Heart left ventricle (tissue), 16 donors: ENCODE measurements at regions of chr20 and their contacts with region 1.

Region 1: DNA sequence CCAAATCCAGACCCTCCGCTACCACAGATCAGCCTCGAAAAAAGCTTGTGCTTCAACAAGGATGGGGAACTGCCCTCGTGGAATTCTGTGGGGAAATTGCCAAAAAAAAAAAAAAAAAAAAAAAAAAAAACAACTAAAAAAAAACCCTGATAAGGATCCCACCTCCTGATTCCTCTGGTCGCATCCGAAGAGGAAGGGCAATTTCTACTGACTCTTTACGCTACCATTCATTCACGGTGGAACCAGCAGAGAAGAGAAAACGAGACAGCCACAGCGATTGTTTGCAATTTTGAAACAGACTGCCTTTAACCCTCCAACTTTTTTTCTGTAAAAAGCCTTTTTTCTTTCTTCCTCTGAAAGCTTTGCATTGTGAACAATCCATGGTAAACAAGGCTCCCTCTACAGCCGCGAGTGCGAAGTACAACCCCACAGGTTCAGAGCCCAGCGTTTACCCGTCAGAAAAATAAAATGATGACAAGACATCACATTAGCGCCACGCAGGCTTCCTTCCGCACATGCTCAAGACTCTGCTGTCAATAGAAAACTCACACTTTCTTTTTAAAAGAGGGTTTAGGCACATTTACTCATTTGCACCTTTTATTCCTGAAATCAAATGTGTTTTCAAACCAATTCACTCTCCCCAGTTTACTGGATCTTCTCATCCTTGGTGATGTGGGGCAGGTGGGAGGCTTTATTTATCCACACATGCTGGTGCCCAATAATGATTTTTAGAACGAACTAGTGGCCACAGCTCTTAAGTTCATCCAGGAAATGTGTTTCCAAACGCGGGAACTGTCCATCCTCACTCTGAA is 100.0 kb downstream of the NOL4L start:
- DNase-seq: peak in 4 of 5 donors; percentile 62 to 78 (median 72)
- ATAC-seq: peak; percentile 27 to 66 (median 50)
- H3K4me3 ChIP-seq: peak overlapping the region; percentile 55 to 99 (median 81)
- H3K27ac ChIP-seq: peak overlapping the region in 11 of 12 donors; percentile 68 to 93 (median 83)
- H3K4me1 ChIP-seq: peaks cover 0 to 41% (median 22%) of the 10 kb centered on the region in 12 donors
- H3K27me3 ChIP-seq: no peaks in the 10 kb centered on the region
- CTCF ChIP-seq: peak; percentile 55 to 92 (median 80)
- POLR2A ChIP-seq: no peak

Region 2: GRCh38 chr20:32155017-32155981 is 329.9 kb before region 1 on chr20:
- intact Hi-C with region 1: loop called in 2 of 10 experiments (anchors 5 to 10 kb)
- DNase-seq: peak; percentile 84 to 92 (median 89)
- ATAC-seq: peak; percentile 77 to 96 (median 94)
- H3K4me3 ChIP-seq: no peak overlapping the region
- H3K27ac ChIP-seq: peak overlapping the region in 11 of 12 donors; percentile 18 to 72 (median 57)
- H3K4me1 ChIP-seq: peaks cover 3 to 24% (median 14%) of the 10 kb centered on the region in 12 donors
- H3K27me3 ChIP-seq: no peaks in the 10 kb centered on the region
- CTCF ChIP-seq: peak in 11 of 12 donors; percentile 4 to 50 (median 33)
- POLR2A ChIP-seq: no peak

Region 3: GRCh38 chr20:32207626-32208498 is 277.3 kb before region 1 on chr20 and contains the starts of genes PLAGL2 and POFUT1:
- intact Hi-C with region 1: loop called in 1 of 10 experiments (anchors 5 kb)
- DNase-seq: peak; percentile 90 to 95 (median 93)
- ATAC-seq: peak; percentile 84 to 98 (median 96)
- H3K4me3 ChIP-seq: peak within 1 kb of the TSS; percentile 70 to 99 (median 96)
- H3K27ac ChIP-seq: peak within 1 kb of the TSS; percentile 85 to 99 (median 93)
- H3K4me1 ChIP-seq: peaks cover 10 to 57% (median 45%) of the 10 kb centered on the region in 12 donors
- H3K27me3 ChIP-seq: no peaks in the 10 kb centered on the region
- CTCF ChIP-seq: peak in 8 of 12 donors; percentile 26 to 46 (median 32)
- POLR2A ChIP-seq: peak in 1 of 2 donors; percentile 81
- total RNA-seq, gene PLAGL2: 4.4 to 9.9 (median 7.8) TPM
- total RNA-seq, gene POFUT1: 26.0 to 48.5 (median 27.5) TPM

Region 4: DNA sequence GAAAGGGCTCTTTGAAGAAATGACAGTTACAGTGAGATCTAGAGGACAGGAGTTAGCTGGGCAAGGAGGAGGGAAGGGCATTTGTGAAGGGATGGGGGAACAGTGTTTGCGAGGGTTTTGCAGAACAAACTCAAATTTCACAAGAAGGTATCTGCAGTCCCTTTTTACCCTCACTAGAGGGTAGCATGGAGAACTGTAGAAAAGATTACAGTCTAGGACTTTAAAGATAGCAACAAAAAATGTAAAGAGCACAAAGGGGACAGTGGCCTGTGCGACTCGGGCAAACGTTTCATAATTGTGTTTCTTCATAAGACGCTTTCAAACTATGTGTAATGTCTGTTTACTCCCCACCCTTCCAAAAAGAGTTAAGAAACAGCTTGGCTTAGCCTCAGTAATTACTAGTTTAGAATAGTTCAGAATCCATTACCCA is 148.2 kb before region 1 on chr20:
- intact Hi-C with region 1: loop called in 5 of 10 experiments (anchors 5 to 10 kb)
- DNase-seq: no peak
- ATAC-seq: no peak
- H3K4me3 ChIP-seq: no peak overlapping the region
- H3K27ac ChIP-seq: no peak overlapping the region
- H3K4me1 ChIP-seq: peaks cover 4 to 46% (median 28%) of the 10 kb centered on the region in 12 donors
- H3K27me3 ChIP-seq: no peaks in the 10 kb centered on the region
- CTCF ChIP-seq: peak; percentile 30 to 67 (median 49)
- POLR2A ChIP-seq: no peak

Region 5: GRCh38 chr20:32437391-32438074 is 47.6 kb before region 1 on chr20:
- intact Hi-C with region 1: loop called in 1 of 10 experiments (anchors 10 kb)
- DNase-seq: no peak
- ATAC-seq: no peak
- H3K4me3 ChIP-seq: no peak overlapping the region
- H3K27ac ChIP-seq: no peak overlapping the region
- H3K4me1 ChIP-seq: peaks cover 4 to 20% (median 14%) of the 10 kb centered on the region in 12 donors
- H3K27me3 ChIP-seq: no peaks in the 10 kb centered on the region
- CTCF ChIP-seq: peak in 1 of 12 donors; percentile 13
- POLR2A ChIP-seq: no peak

Region 6: GRCh38 chr20:32466739-32467505 is 18.2 kb before region 1 on chr20:
- intact Hi-C with region 1: loop called in 1 of 10 experiments (anchors 1 kb)
- DNase-seq: peak in 2 of 5 donors; percentile 23 to 52
- ATAC-seq: no peak
- H3K4me3 ChIP-seq: no peak overlapping the region
- H3K27ac ChIP-seq: peak overlapping the region in 7 of 12 donors; percentile 25 to 82 (median 69)
- H3K4me1 ChIP-seq: peaks cover 3 to 81% (median 51%) of the 10 kb centered on the region in 12 donors
- H3K27me3 ChIP-seq: no peaks in the 10 kb centered on the region
- CTCF ChIP-seq: no peak
- POLR2A ChIP-seq: no peak

Region 7: DNA sequence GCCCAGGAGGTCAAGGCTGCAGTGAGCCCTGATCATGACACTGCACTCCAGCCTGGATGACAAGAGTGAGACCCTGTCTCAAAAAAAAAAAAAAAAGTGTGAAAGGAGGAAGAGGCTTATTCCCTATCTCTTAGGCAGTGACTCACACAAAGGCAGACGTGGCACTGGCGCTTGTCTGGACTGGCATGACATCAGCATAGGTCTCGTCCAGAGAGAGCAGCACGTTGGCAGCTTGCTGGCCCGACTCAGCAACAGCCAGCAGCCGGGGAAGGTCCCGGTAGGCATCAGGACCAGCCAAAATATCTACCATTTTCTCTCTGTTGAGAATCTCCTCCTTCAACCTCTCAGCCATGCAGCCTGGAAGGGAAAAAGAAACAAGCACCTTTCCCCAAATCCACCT is 902.0 kb after region 1 on chr20:
- intact Hi-C with region 1: no loop called
- DNase-seq: peak; percentile 50 to 82 (median 69)
- ATAC-seq: peak; percentile 87 to 97 (median 96)
- H3K4me3 ChIP-seq: no peak overlapping the region
- H3K27ac ChIP-seq: peak overlapping the region in 4 of 12 donors; percentile 2 to 48 (median 30)
- H3K4me1 ChIP-seq: peaks cover 0 to 5% (median 0%) of the 10 kb centered on the region in 12 donors
- H3K27me3 ChIP-seq: no peaks in the 10 kb centered on the region
- CTCF ChIP-seq: no peak
- POLR2A ChIP-seq: no peak